HEK293T (cell line): ENCODE measurements at regions of chr3 and their contacts with region 1.

Region 1: DNA sequence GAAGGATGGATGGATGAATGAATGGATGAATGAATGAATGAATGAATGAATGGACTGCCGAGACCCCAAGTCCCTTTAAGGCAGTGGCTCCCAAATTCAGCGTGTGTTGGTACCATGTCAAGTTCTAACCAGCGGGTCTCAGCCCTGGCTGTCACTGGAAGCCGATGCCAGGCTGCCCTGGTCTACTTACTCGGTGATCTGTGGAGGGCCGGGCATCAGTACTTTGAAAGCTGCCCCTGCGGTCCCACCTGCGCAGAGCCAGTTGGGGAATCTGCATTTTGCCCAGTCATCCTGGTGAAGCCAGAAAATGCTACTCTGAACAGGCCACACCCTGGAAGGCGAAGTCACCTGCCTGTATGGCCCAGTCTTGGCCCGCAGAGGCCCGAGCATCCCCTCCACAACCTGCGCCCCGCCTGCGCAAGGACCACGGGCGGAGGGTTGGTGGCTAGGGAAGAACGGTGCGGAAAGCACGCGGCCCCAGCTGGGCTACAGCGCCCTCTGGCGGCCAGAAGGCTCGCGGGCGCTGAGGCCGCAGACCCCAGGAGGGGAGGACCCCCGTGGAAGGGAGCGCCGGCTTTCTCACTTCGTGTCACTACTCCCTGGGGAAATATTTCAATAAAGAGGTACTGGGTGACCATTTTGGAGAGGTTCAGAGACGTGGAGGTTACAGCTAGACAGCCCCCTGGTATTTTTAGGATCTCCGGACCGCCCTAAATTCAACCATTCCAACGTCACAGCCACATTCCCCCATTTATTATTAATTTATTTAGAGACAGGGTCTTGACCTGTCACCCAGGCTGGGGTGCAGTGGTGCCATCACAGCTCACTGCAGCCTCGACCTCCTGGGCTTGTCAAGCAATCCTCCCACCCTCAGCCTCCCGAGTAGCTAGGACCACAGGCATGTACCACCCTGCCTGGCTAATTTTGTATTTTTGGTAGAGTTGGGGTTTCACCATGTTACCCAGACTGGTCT is 34.9 kb downstream of the PRKCD start:
- DNase-seq: peak; percentile 87

Region 2: DNA sequence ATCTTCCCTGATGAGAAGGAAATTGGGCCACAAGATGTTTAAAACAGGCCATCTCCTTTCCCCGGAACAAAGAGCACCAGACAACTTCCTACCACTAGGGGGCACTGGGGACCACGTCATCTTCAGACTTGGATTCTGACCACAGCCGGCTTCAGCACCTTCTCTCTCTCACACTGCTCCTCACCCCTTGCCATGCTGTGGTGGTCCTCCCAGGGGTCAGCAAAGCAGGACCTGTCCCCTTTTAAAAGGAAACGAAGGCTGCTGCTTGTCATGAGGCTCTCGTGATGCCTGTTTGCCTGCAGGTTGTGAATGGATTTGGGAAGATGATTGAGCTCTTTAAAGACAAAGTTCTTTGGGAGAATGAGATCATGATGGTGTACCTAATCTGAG is 81.9 kb before region 1 on chr3:
- CTCF ChIA-PET with region 1: interaction called, 21 read pairs
- POLR2A ChIA-PET with region 1: interaction called, 12 read pairs
- DNase-seq: peak; percentile 89

Region 3: GRCh38 chr3:53130179-53131061 is 65.5 kb before region 1 on chr3 and contains the start of gene RFT1:
- CTCF ChIA-PET with region 1: interaction called, 12 read pairs
- POLR2A ChIA-PET with region 1: interaction called, 15 read pairs
- DNase-seq: peak; percentile 92